WTC11 (cell line): ENCODE measurements at regions of chr6 and their contacts with region 1.

Region 1: DNA sequence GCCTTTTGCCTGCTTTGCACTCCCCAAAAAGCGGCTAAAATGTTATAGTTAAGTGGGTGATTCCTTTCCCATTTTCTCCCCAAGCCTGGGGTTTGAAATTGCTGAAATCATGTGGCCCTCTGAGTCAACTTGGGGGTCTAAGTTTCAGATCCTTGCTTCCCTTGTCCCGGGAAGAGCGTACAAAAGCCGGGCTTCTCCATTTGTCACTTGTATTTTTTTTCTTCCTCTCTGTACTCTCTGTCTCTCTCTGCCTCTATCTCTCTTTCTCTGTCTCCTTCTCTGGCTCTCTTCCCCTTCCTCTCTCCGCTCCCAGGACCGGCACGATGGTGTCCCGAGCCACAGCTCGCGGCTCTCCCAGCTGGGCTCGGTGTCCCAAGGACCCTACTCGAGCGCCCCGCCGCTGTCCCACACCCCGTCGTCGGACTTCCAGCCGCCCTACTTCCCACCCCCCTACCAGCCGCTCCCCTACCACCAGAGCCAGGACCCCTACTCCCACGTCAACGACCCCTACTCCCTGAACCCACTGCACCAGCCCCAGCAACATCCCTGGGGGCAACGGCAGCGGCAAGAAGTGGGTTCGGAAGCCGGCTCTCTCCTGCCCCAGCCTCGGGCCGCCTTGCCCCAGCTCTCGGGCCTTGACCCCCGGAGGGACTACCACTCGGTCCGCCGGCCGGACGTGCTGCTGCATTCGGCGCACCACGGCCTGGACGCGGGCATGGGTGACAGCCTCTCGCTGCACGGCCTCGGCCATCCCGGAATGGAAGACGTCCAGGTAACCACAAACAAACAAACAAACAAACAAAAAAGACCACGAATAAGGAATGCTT is 4.6 kb downstream of the TFAP2B start:
- DNase-seq: peak; percentile 33
- ATAC-seq: no peak
- H3K4me3 Mint-ChIP-seq: peak overlapping the region; percentile 56
- H3K27ac Mint-ChIP-seq: no peak overlapping the region
- H3K4me1 Mint-ChIP-seq: peaks cover 86% of the 10 kb centered on the region
- H3K27me3 Mint-ChIP-seq: peaks cover 100% of the 10 kb centered on the region
- CTCF ChIP-seq: no peak

Region 2: DNA sequence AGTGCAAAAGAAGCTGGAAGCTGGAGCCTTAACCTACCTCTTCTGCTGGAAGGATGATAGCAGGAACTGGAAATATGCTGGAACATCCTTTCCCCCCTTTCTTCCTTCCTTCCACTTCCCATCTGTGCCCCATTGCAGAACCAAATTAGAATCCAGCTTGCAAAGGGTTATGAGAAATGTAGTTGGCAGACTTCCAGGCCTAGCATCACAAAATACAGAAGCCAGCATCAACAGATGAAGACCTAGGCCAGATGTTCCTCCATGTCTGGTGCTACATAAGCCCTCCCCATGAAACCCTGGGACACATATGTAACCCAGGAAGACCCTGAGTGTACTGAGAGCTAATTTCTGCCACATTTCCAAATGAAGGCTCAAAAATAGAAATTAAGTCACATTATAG is 44.6 kb before region 1 on chr6:
- CTCF ChIA-PET with region 1: no interaction called
- POLR2A ChIA-PET with region 1: no interaction called
- DNase-seq: no peak
- ATAC-seq: no peak
- H3K4me3 Mint-ChIP-seq: no peak overlapping the region
- H3K27ac Mint-ChIP-seq: no peak overlapping the region
- H3K4me1 Mint-ChIP-seq: no peaks in the 10 kb centered on the region
- H3K27me3 Mint-ChIP-seq: no peaks in the 10 kb centered on the region; the same call in 1 of the 2 replicates
- CTCF ChIP-seq: no peak

Region 3: GRCh38 chr6:50807035-50807434 is 16.3 kb before region 1 on chr6:
- CTCF ChIA-PET with region 1: no interaction called
- POLR2A ChIA-PET with region 1: no interaction called
- DNase-seq: no peak
- ATAC-seq: no peak
- H3K4me3 Mint-ChIP-seq: no peak overlapping the region
- H3K27ac Mint-ChIP-seq: no peak overlapping the region
- H3K4me1 Mint-ChIP-seq: no peaks in the 10 kb centered on the region
- H3K27me3 Mint-ChIP-seq: peaks cover 9% of the 10 kb centered on the region
- CTCF ChIP-seq: no peak

Region 4: DNA sequence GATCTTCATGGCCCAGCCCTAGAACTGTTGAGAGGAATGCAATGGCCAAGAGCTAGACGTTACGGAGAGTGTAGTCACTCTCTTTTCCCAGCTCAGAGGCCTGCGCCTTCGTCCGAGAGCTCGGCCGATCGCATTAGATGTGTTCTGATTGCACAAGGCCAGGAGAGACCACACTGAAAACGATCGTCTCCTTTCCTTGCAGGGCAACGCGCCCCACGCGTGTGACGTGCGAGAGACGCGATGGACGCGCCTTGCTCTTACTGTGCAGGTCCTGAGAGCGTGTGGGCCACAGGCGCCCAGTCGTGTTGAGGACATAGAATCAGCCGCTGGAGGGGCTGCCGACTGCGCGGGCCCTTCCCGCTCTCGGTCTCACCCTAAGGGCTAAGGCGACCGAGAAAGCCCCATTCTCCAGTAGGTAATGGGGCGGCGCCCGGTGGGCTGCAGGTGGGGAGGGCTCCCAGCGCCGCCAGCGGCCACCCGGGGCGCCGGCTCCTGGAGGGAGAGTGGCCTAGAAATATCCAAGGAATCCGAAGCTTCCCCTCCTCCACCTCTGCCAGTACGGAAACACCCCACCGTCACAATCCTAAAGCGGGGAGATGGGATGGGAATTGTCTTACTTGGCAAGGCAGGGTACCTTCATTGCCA is 22.3 kb after region 1 on chr6:
- CTCF ChIA-PET with region 1: interaction called, 14 read pairs
- POLR2A ChIA-PET with region 1: interaction called, 5 read pairs
- DNase-seq: peak; percentile 54
- ATAC-seq: peak; percentile 19
- H3K4me3 Mint-ChIP-seq: peak overlapping the region; percentile 86
- H3K27ac Mint-ChIP-seq: no peak overlapping the region
- H3K4me1 Mint-ChIP-seq: peaks cover 77% of the 10 kb centered on the region
- H3K27me3 Mint-ChIP-seq: peaks cover 100% of the 10 kb centered on the region
- CTCF ChIP-seq: no peak